A549 (cell line): ENCODE measurements at regions of chrX and their contacts with region 1.

Region 1: DNA sequence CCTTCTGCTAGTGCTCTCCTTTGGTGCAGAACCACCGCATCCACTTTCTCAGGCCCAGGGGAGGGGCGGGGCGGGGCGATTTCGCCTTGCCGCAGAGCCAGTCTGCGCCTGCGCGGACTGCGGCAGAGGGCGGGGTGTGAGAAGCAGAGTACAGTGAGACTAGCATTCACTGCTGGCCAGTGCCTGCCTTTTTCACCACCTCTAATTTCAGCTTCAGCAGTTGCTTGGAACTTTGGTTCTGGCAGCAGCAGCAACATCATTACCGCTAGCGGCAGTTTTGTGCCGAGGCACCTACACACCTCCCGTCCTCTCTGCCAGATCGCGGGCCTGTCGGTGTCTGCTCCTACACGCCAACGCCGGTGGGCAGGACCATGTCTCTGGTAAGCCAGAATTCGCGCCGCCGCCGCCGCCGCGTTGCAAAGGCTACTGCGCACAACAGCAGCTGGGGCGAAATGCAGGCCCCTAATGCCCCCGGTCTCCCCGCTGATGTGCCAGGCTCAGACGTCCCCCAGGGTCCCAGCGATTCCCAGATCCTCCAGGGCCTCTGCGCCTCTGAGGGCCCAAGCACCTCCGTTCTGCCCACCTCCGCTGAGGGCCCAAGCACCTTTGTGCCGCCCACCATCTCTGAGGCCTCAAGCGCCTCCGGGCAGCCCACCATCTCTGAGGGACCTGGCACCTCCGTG is at the start of gene MAGEE1:
- DNase-seq: peak; percentile 50 to 67
- ATAC-seq: peak; percentile 96 to 98
- H3K4me3 ChIP-seq: peak within 1 kb of the TSS; percentile 75
- H3K27ac ChIP-seq: peak within 1 kb of the TSS; percentile 61 to 85
- H3K4me1 ChIP-seq: no peaks in the 10 kb centered on the region
- CTCF ChIP-seq: no peak
- EP300 ChIP-seq: no peak
- POLR2A ChIP-seq: peak; percentile 56
- RAD21 ChIP-seq: no peak
- polyA plus RNA-seq, gene MAGEE1: 0.87 and 1.8 TPM in 2 replicates

Region 2: GRCh38 chrX:74636749-74637314 is 1790.9 kb before region 1 on chrX:
- CTCF ChIA-PET with region 1: no interaction called
- POLR2A ChIA-PET with region 1: interaction called, 12 read pairs
- DNase-seq: no peak
- ATAC-seq: no peak
- H3K4me3 ChIP-seq: no peak overlapping the region
- H3K27ac ChIP-seq: no peak overlapping the region
- H3K4me1 ChIP-seq: no peaks in the 10 kb centered on the region
- CTCF ChIP-seq: no peak
- EP300 ChIP-seq: no peak
- POLR2A ChIP-seq: no peak
- RAD21 ChIP-seq: no peak

Region 3: GRCh38 chrX:76439188-76439587 is 11.5 kb after region 1 on chrX:
- CTCF ChIA-PET with region 1: no interaction called
- POLR2A ChIA-PET with region 1: no interaction called
- DNase-seq: no peak
- ATAC-seq: no peak
- H3K4me3 ChIP-seq: no peak overlapping the region
- H3K27ac ChIP-seq: no peak overlapping the region
- H3K4me1 ChIP-seq: no peaks in the 10 kb centered on the region
- CTCF ChIP-seq: no peak
- EP300 ChIP-seq: no peak
- POLR2A ChIP-seq: no peak
- RAD21 ChIP-seq: no peak

Region 4: GRCh38 chrX:76509775-76510174 is 82.1 kb after region 1 on chrX:
- CTCF ChIA-PET with region 1: no interaction called
- POLR2A ChIA-PET with region 1: no interaction called
- DNase-seq: no peak
- ATAC-seq: no peak
- H3K4me3 ChIP-seq: no peak overlapping the region
- H3K27ac ChIP-seq: no peak overlapping the region
- H3K4me1 ChIP-seq: no peaks in the 10 kb centered on the region
- CTCF ChIP-seq: no peak
- EP300 ChIP-seq: no peak
- POLR2A ChIP-seq: no peak
- RAD21 ChIP-seq: no peak